H1 (cell line): ENCODE measurements at regions of chr11 and their contacts with region 1.

Region 1: DNA sequence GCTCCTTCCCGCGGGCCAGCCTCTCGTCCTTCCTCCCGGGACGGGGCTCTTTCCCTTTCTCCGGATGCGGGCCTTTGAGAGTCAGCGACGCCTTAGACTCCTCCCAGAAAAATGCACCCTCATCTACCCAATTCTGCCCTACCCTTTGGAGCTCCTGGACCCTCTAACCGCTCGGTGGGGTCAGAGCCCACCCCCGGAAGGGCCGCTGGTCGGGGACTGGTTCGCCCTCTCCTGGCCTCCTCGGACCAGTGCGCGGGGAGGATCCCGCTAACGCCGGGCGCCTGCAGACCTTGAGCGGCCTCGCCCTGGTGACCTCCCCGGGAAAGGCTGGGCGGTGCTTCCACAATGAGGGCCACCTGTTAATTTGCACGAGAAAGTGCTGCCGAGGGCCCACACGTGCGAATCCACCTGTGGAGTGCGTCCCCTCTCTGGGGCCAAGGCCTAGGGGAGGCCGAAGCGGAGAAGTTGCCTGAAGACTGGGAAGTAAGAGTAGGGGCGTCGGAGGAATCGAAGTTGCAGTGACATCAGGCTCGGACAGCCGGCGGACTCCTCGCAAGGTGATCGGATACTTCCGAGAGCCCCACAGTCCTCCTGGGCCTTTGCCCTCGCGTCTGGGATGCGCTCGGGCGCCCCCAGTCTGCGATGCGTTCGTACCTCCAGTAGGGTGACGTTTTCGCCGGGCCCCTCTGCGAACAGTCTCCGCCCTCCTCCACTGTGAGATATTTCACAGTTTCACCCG is 61.5 kb downstream of the ENDOD1 start:
- DNase-seq: peak; percentile 91 to 93
- H3K4me3 ChIP-seq: peak overlapping the region; percentile 38 to 73 (median 60)
- H3K27ac ChIP-seq: no peak overlapping the region
- H3K4me1 ChIP-seq: peaks cover 3 to 5% (median 4%) of the 10 kb centered on the region in 4 experiments; a peak in 6 of 7 replicates
- H3K27me3 ChIP-seq: peaks cover 15 to 45% (median 36%) of the 10 kb centered on the region in 4 experiments
- CTCF ChIP-seq: peak; percentile 71 to 96 (median 91)
- EP300 ChIP-seq: no peak
- POLR2A ChIP-seq: no peak; a peak in 1 of 3 replicates
- RAD21 ChIP-seq: peak; percentile 20 to 86

Region 2: GRCh38 chr11:95042239-95042638 is 108.9 kb before region 1 on chr11:
- CTCF ChIA-PET with region 1: no interaction called
- POLR2A ChIA-PET with region 1: no interaction called
- DNase-seq: no peak
- H3K4me3 ChIP-seq: no peak overlapping the region
- H3K27ac ChIP-seq: no peak overlapping the region
- H3K4me1 ChIP-seq: no peaks in the 10 kb centered on the region
- H3K27me3 ChIP-seq: no peaks in the 10 kb centered on the region; a peak in 1 of 7 replicates
- CTCF ChIP-seq: no peak
- EP300 ChIP-seq: no peak
- POLR2A ChIP-seq: no peak
- RAD21 ChIP-seq: no peak

Region 3: GRCh38 chr11:95067039-95067840 is 83.9 kb before region 1 on chr11:
- CTCF ChIA-PET with region 1: interaction called, 32 read pairs
- POLR2A ChIA-PET with region 1: interaction called, 35 read pairs
- DNase-seq: peak in 1 of 2 experiments; percentile 83
- H3K4me3 ChIP-seq: peak overlapping the region; percentile 70 to 85 (median 72)
- H3K27ac ChIP-seq: peak overlapping the region; percentile 62; the same call in 1 of the 2 replicates
- H3K4me1 ChIP-seq: peaks cover 0 to 2% (median 0%) of the 10 kb centered on the region in 4 experiments; a peak in 2 of 7 replicates
- H3K27me3 ChIP-seq: no peaks in the 10 kb centered on the region
- CTCF ChIP-seq: peak; percentile 38 to 76 (median 39)
- EP300 ChIP-seq: no peak
- POLR2A ChIP-seq: peak; percentile 62 to 78
- RAD21 ChIP-seq: 0 out of 4 replicates have a peak, but pooled peaks have one; percentile 4 to 13

Region 4: DNA sequence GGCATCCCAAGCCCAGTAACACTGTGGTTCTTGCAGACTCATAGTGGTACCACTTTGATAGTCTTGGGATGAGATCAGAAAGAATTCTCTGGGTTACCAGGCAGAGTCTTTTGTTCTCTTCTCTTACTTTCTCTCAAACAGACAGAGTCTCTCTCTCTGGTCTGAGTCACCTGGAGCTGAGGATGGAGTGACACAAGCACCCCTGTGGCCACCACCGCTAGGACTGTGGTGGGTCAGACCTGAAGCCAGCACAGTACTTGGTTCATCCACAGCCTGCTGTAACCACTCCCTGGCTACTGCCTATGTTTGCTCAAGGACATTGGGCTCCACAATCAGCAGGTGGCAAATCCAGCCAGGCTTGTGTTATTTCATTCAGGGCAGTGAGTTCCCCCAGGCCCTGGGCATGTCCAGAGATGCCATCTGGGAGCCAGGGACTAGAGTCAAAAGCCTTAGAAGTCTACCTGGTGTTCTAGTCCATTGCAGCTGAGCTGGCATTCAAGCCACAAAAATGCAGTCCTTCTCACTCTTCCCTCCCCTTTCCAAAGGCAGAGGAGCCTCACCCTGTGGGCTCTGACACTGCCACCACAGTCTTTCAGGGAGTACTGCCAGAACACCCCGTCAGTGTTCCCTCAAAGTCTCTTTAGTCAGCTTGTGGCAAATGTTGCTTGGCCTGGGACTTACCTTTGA is 31.6 kb before region 1 on chr11:
- CTCF ChIA-PET with region 1: no interaction called
- POLR2A ChIA-PET with region 1: no interaction called
- DNase-seq: no peak
- H3K4me3 ChIP-seq: no peak overlapping the region
- H3K27ac ChIP-seq: no peak overlapping the region
- H3K4me1 ChIP-seq: no peaks in the 10 kb centered on the region
- H3K27me3 ChIP-seq: no peaks in the 10 kb centered on the region
- CTCF ChIP-seq: no peak
- EP300 ChIP-seq: no peak
- POLR2A ChIP-seq: no peak
- RAD21 ChIP-seq: no peak

Region 5: DNA sequence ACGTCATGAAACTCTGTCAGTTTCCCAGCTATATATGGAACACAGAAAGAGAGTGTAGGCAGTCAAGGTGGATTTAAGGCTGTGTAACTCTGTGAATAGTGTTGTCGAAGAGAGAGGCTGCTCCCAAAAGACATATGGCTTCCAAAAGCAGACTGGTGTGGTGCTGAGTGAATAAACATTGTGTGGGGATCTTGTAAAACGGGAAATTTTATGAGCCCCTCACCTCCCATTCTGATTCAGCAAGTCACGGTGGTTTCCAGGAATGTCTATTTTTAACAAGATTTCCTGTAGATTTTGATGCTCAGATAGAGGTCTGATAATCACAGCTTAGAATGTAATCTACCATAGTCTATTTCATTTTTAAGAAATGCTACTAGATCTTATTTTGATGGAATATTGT is 12.0 kb after region 1 on chr11:
- CTCF ChIA-PET with region 1: interaction called, 12 read pairs
- POLR2A ChIA-PET with region 1: interaction called, 3 read pairs
- DNase-seq: no peak
- H3K4me3 ChIP-seq: no peak overlapping the region
- H3K27ac ChIP-seq: no peak overlapping the region
- H3K4me1 ChIP-seq: no peaks in the 10 kb centered on the region
- H3K27me3 ChIP-seq: no peaks in the 10 kb centered on the region
- CTCF ChIP-seq: no peak
- EP300 ChIP-seq: no peak
- POLR2A ChIP-seq: no peak
- RAD21 ChIP-seq: no peak

Region 6: DNA sequence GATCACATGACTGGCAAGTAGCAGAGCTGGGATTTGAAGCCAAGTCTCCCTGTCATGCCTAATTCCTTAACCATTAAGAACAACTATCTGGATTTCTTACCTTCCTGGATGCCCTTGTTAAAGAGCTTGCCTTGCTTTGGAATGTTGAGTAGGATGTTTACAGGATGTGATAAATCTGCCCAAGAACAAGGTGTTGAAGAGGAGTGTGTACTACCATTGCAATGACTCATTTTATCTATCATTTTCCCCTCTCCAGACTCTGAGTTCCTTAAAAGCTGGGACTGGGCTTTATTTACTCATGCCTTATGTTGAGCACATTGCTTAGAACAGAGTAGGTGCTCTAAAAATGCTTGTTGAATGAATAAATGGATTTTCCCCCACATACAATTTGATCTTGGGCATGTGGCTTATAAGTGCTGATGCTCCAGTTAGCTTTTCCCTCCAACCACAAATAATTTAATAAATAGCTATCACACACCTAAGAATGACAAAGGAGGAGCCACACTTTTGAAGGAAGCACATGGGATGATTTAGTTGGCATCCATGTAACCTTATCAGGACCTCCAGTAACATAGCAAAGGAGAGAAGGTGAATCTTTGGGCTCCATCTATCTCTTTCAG is 348.5 kb after region 1 on chr11:
- CTCF ChIA-PET with region 1: interaction called, 13 read pairs
- POLR2A ChIA-PET with region 1: no interaction called
- DNase-seq: no peak
- H3K4me3 ChIP-seq: no peak overlapping the region
- H3K27ac ChIP-seq: no peak overlapping the region
- H3K4me1 ChIP-seq: peaks cover 4 to 13% (median 5%) of the 10 kb centered on the region in 4 experiments; a peak in 6 of 7 replicates
- H3K27me3 ChIP-seq: no peaks in the 10 kb centered on the region
- CTCF ChIP-seq: no peak
- EP300 ChIP-seq: no peak
- POLR2A ChIP-seq: no peak
- RAD21 ChIP-seq: no peak

Region 7: DNA sequence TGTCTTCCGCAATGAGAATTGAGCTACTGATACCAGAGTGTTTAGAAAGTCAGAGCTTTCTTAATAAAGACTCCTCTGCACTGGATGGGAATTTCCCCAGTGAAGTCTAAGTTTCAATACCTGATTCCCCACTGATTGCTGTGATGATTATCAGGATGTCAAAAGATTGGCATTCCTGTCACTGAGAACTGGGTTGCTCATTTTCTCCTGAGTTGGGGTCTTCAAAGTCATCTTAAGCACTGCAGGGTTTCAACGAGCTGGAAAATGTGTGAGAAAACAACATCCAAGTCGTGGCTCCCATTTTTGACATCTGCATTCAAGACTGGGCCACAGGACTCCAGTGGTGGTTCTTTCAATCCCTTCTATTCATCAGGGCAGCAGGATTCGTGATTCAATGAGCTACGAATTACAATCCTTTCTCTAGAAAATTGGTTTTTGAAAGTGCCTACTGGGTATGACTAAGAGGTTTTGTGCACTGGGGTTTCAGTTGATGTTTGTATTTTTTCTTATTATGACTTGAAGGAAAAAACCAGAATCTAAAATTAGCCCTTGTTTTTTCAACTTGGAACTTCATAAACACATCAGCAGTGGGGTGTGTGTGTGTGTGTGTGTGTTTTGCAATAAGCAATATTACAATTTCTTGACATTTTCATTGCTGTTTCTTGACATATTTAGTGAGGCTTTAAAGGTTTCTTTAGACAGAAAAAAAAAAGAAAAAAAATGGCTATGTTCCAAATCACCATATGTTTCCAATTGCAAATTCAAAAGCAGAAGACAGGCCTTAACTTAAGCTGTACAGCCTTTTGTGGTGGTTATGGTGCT is 405.4 kb after region 1 on chr11:
- CTCF ChIA-PET with region 1: interaction called, 10 read pairs
- POLR2A ChIA-PET with region 1: no interaction called
- DNase-seq: no peak
- H3K4me3 ChIP-seq: no peak overlapping the region
- H3K27ac ChIP-seq: no peak overlapping the region; the same call in 1 of the 2 replicates
- H3K4me1 ChIP-seq: peaks cover 3 to 7% (median 5%) of the 10 kb centered on the region in 4 experiments; a peak in 4 of 7 replicates
- H3K27me3 ChIP-seq: no peaks in the 10 kb centered on the region
- CTCF ChIP-seq: no peak
- EP300 ChIP-seq: no peak
- POLR2A ChIP-seq: no peak
- RAD21 ChIP-seq: no peak

Region 8: DNA sequence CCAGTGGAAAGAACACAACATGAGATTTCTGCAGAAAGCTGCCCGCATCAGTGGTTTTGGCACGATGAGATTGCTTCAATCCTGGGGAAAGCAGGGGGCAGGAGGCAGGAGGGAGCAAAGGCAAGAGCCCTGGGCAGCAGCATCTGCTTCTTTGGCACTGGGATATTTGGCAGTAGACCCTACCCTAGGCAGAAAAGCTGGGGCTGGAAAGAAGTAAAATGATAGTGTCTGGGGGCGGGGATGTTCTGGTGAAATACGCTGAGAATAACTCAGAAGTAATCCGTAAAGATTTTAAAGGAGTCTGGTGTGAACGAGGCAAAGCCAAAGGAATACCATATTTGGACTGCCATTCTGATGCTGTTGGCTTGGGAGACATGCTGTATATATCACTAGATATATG is 576.5 kb after region 1 on chr11:
- CTCF ChIA-PET with region 1: interaction called, 11 read pairs
- POLR2A ChIA-PET with region 1: no interaction called
- DNase-seq: no peak
- H3K4me3 ChIP-seq: no peak overlapping the region
- H3K27ac ChIP-seq: no peak overlapping the region
- H3K4me1 ChIP-seq: no peaks in the 10 kb centered on the region
- H3K27me3 ChIP-seq: no peaks in the 10 kb centered on the region
- CTCF ChIP-seq: no peak
- EP300 ChIP-seq: no peak
- POLR2A ChIP-seq: no peak
- RAD21 ChIP-seq: no peak

Region 9: GRCh38 chr11:95764267-95764898 is 613.3 kb after region 1 on chr11:
- CTCF ChIA-PET with region 1: interaction called, 266 read pairs
- POLR2A ChIA-PET with region 1: interaction called, 3 read pairs
- DNase-seq: no peak
- H3K4me3 ChIP-seq: no peak overlapping the region
- H3K27ac ChIP-seq: no peak overlapping the region
- H3K4me1 ChIP-seq: no peaks in the 10 kb centered on the region
- H3K27me3 ChIP-seq: no peaks in the 10 kb centered on the region
- CTCF ChIP-seq: peak in 2 of 3 experiments; percentile 38 to 52; a peak in 2 of 4 replicates
- EP300 ChIP-seq: no peak
- POLR2A ChIP-seq: no peak
- RAD21 ChIP-seq: peak; percentile 77 to 80